Thyroid gland (tissue), 4 donors: ENCODE measurements at regions of chr1 and their contacts with region 1.

Region 1: GRCh38 chr1:203692565-203693470 is 66.2 kb downstream of the ATP2B4 start:
- DNase-seq: peak; percentile 94 to 95
- H3K4me3 ChIP-seq: no peak overlapping the region
- H3K27ac ChIP-seq: peak overlapping the region; percentile 83 to 89 (median 86)
- H3K4me1 ChIP-seq: peaks cover 16 to 39% of the 10 kb centered on the region in 2 donors
- H3K27me3 ChIP-seq: no peaks in the 10 kb centered on the region
- CTCF ChIP-seq: peak in 3 of 6 experiments; percentile 12 to 39 (median 28)
- POLR2A ChIP-seq: peak in 1 of 2 donors; percentile 28

Region 2: GRCh38 chr1:203612932-203613682 is 79.7 kb before region 1 on chr1:
- intact Hi-C with region 1: no loop called
- DNase-seq: no peak
- H3K4me3 ChIP-seq: no peak overlapping the region
- H3K27ac ChIP-seq: no peak overlapping the region
- H3K4me1 ChIP-seq: no peaks in the 10 kb centered on the region
- H3K27me3 ChIP-seq: no peaks in the 10 kb centered on the region
- CTCF ChIP-seq: no peak
- POLR2A ChIP-seq: no peak

Region 3: DNA sequence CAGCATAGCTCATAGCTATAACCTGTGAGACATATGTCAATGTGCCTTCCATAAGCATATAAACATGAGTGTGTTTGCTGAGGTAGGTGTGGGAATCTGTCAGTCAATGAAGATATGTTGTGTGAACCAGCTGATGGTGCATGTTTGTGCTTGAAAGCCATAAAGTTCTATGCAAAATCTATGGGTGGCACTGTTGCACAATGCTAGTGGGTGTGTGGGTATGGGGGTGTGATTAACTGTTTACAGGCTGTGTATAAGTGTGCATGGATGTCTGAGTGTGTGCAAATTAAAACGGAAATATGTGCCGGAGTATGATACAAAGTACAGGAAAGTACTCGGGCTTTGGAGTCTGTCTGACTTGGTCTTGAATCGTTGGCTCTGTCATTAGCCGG is 67.2 kb before region 1 on chr1:
- intact Hi-C with region 1: loop called (anchors 5 kb)
- DNase-seq: peak in 1 of 2 donors; percentile 25
- H3K4me3 ChIP-seq: no peak overlapping the region
- H3K27ac ChIP-seq: no peak overlapping the region
- H3K4me1 ChIP-seq: peaks cover 17 to 30% of the 10 kb centered on the region in 2 donors
- H3K27me3 ChIP-seq: no peaks in the 10 kb centered on the region
- CTCF ChIP-seq: peak in 4 of 6 experiments; percentile 37 to 63 (median 48)
- POLR2A ChIP-seq: no peak

Region 4: DNA sequence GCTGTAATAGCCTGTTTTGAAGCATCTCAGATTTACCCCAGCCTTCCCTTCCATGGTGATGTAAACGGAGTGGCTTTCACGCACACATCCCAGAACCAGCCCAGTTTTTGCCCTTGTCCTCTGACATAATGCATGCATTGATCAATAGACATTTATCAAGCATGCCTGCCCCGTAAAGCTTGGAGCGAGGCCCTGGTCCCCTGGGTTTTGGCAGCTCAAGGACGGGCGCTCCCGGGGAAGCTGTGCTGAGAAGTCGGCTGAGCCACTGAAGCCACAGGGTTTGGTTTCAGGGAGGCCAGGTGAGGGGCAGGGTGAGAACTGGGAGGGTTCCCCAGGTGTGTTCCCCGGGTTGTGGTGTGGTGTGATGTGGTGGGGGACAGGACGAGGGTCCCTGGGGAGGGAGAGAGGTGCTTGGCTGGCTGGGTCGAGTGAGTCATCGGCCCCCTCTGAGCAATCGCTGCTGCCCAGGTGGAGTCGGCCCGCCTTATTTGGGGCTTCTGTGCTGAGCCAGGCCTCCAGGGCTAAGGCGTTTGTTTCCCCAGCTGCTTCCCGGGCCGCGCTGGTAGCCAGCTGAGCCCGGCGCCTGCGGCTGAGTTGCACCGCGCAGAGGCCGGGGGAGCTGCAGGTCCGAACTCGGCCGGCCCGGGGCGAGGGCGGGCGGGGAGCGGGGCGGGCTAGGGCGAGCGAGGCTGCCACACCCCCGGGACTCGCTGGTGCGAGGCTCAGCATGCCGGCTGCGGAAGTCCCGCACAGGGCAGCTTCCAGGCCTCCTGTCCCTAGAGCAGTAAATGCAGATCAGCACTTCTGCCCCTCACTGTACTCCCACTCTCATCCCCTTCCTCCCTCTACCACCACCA is 42.6 kb before region 1 on chr1:
- intact Hi-C with region 1: no loop called
- DNase-seq: peak; percentile 64 to 69
- H3K4me3 ChIP-seq: peak overlapping the region in 1 of 3 donors; percentile 6
- H3K27ac ChIP-seq: peak overlapping the region in 1 of 3 donors; percentile 68
- H3K4me1 ChIP-seq: peaks cover 14 to 55% of the 10 kb centered on the region in 2 donors
- H3K27me3 ChIP-seq: no peaks in the 10 kb centered on the region
- CTCF ChIP-seq: no peak
- POLR2A ChIP-seq: no peak

Region 5: GRCh38 chr1:203911806-203912205 is 219.0 kb after region 1 on chr1:
- intact Hi-C with region 1: no loop called
- DNase-seq: no peak
- H3K4me3 ChIP-seq: no peak overlapping the region
- H3K27ac ChIP-seq: no peak overlapping the region
- H3K4me1 ChIP-seq: no peaks in the 10 kb centered on the region
- H3K27me3 ChIP-seq: no peaks in the 10 kb centered on the region
- CTCF ChIP-seq: no peak
- POLR2A ChIP-seq: no peak